ENCODE measurements at regions of chr20 and their contacts with region 1.

Region 1: DNA sequence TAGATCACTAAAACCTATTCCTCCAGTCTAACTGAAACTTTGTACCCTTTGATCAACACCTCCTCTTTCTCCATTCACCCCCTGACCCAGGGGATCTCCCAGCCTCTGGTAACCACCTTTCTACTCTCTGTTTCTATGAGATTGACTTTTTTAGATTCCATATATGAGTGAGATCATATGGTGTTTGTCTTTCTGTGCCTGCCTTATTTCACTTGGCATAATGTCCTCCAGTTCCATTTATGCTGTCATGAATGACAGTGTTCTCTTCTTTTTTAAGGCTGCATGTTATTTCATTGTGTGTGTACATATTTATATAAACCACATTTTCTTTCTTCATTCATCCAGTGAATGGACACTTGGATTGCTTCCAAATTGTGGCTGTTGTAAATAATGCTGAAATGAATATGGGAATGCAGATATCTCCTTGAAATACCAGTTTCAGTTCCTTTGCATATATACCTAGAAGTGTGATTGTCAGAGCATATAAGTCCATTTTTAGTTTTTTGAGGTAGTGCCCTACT is 57.7 kb downstream of the DHX35 start:
- DNase-seq: no peak
- H3K4me3 Mint-ChIP-seq: no peak overlapping the region
- H3K27ac Mint-ChIP-seq: peak overlapping the region; percentile 8
- H3K4me1 Mint-ChIP-seq: peaks cover 76% of the 10 kb centered on the region
- H3K27me3 Mint-ChIP-seq: no peaks in the 10 kb centered on the region

Region 2: GRCh38 chr20:38805502-38805957 is 214.3 kb before region 1 on chr20 and contains the start of gene PPP1R16B:
- intact Hi-C with region 1: loop called (anchors 10 kb)
- DNase-seq: peak; percentile 79
- H3K4me3 Mint-ChIP-seq: peak within 1 kb of the TSS; percentile 90
- H3K27ac Mint-ChIP-seq: peak within 1 kb of the TSS; percentile 96
- H3K4me1 Mint-ChIP-seq: peaks cover 64% of the 10 kb centered on the region
- H3K27me3 Mint-ChIP-seq: no peaks in the 10 kb centered on the region
- total RNA-seq, gene PPP1R16B: 139 and 143 TPM in 2 replicates

Region 3: DNA sequence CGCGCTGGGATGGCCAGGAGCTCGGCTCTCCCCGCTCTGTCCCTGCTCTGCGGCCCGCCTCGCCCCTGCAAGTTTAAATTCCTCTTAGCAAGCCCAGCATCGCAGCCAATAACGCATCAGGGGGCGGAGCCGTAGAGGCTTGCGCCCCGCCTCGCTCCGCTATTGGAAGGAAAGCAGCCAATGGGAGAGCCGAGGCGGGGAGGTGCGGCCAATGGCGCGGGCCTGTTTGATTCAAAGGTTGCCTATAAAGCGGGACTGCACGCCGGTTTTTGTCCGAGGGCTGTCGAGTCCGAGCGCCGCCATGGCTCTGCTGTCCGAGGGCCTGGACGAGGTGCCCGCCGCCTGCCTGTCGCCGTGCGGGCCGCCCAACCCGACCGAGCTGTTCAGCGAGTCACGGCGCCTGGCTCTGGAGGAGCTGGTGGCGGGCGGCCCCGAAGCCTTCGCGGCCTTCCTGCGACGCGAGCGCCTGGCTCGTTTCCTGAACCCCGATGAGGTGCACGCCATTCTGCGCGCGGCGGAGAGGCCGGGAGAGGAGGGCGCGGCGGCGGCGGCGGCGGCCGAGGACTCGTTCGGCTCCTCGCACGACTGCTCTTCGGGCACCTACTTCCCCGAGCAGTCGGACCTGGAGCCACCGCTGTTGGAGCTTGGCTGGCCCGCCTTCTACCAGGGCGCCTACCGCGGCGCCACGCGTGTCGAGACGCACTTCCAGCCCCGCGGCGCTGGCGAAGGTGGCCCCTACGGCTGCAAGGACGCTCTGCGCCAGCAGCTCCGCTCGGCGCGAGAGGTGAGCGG is 93.5 kb before region 1 on chr20 and contains the start of gene FAM83D:
- intact Hi-C with region 1: loop called (anchors 1 kb)
- DNase-seq: peak; percentile 97
- H3K4me3 Mint-ChIP-seq: peak within 1 kb of the TSS; percentile 86
- H3K27ac Mint-ChIP-seq: peak within 1 kb of the TSS; percentile 81
- H3K4me1 Mint-ChIP-seq: peaks cover 39% of the 10 kb centered on the region
- H3K27me3 Mint-ChIP-seq: no peaks in the 10 kb centered on the region
- total RNA-seq, gene FAM83D: 11.0 and 12.4 TPM in 2 replicates

Region 4: GRCh38 chr20:38982316-38982715 is 37.5 kb before region 1 on chr20:
- intact Hi-C with region 1: loop called (anchors 5 kb)
- DNase-seq: no peak
- H3K4me3 Mint-ChIP-seq: no peak overlapping the region
- H3K27ac Mint-ChIP-seq: no peak overlapping the region
- H3K4me1 Mint-ChIP-seq: peaks cover 17% of the 10 kb centered on the region
- H3K27me3 Mint-ChIP-seq: no peaks in the 10 kb centered on the region

Region 5: DNA sequence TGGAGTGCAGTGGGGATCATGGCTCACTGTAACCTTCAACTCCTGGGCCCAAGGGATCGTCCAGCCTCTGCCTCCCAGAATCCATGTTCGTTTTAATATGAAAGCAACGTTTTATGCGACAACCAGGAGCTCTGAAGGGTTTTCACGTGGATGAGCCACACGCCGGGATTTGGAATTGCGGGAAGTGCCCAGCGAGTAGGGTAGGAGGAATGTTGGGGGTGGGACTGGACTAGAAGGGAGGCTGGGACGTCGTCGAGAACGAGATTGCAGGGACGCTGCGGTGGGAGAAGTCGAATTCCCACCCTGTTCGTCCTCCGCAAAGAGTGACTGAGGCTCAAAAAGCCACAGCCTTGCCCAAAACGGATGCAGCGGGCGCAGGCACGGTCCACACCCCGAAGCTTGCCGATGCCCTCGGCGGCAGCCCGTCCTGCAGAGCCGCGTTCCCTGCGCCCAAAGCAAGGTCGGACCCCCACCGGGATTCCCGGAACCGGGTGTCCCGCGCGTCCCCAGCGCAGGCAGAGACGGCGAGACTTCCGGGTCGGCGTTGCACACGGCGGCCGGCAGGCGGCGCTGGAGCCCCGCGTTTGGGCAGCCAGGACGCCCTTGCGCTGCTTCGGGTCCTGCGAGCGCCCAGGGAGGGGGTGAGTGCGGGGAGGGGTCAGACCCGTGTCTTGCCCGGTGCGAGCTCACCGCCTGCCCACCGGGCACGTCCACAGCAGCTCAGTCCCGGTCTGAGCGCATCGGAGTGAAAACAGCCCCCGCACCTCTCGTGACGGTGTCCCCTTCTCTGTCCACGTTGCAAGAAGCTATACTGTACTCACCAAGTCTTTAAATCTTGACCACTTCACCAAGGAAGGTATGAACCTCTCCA is 30.1 kb after region 1 on chr20:
- intact Hi-C with region 1: loop called (anchors 2 kb)
- DNase-seq: peak; percentile 76
- H3K4me3 Mint-ChIP-seq: peak overlapping the region; percentile 85
- H3K27ac Mint-ChIP-seq: peak overlapping the region; percentile 80
- H3K4me1 Mint-ChIP-seq: peaks cover 4% of the 10 kb centered on the region
- H3K27me3 Mint-ChIP-seq: peaks cover 5% of the 10 kb centered on the region

Region 6: GRCh38 chr20:39429716-39430115 is 409.9 kb after region 1 on chr20:
- intact Hi-C with region 1: no loop called
- DNase-seq: no peak
- H3K4me3 Mint-ChIP-seq: no peak overlapping the region
- H3K27ac Mint-ChIP-seq: no peak overlapping the region
- H3K4me1 Mint-ChIP-seq: no peaks in the 10 kb centered on the region
- H3K27me3 Mint-ChIP-seq: no peaks in the 10 kb centered on the region